Ascending aorta (tissue), 2 donors: ENCODE measurements at regions of chr12 and their contacts with region 1.

Region 1: DNA sequence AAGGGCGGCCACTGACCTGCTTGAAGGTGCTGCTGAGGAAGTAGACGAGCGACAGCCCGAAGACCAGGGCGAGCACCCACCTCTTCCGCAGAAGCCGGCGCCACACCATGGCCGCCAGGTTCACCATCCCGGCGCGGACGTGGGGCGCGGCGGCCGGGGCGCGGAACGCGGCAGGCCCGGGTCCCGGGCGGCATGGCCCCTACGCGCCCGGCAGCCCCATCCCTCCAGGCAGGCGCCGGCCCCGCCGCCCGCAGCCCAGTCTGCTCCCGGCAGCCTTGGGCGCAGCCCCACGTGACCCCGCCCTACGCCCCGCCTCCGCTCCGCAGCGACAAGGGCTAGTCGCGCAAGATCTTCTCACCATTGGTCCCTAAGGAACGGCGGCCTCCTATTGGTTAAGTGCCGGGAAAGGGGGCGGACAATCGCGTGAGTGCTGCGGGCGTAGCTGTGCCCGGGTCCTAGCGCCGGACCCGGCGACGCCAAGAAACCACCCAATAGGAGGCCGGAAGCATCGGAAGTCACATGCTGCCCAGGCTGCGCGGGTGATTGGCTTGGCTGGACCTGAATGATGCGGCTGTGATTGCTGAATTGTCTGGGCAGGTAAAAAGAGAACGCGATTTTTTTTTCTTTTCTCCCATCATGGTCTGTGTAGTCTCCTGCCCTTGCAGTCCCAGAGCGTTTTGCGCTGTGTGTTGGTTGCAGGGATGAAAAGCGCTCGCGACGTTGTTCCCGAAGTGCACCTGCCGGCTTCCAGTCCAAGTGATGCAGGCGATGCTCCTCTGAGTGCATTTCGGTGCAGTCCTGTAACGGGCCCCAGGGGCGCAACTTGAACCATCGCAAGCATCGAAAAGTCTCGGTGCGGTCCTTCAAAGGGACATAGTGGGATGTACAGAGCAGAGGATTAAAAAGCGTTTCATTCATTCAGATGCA is at the starts of genes RNFT2 and SPRING1:
- DNase-seq: peak; percentile 98 to 100
- H3K4me3 ChIP-seq: peak within 1 kb of the TSS; percentile 88 to 91
- H3K27ac ChIP-seq: peak within 1 kb of the TSS in 1 of 2 donors; percentile 68
- H3K4me1 ChIP-seq: peaks cover 0 to 6% of the 10 kb centered on the region in 2 donors
- H3K27me3 ChIP-seq: no peaks in the 10 kb centered on the region
- CTCF ChIP-seq: no peak
- total RNA-seq, gene RNFT2: 0.21 TPM
- total RNA-seq, gene SPRING1: 16.0 TPM

Region 2: DNA sequence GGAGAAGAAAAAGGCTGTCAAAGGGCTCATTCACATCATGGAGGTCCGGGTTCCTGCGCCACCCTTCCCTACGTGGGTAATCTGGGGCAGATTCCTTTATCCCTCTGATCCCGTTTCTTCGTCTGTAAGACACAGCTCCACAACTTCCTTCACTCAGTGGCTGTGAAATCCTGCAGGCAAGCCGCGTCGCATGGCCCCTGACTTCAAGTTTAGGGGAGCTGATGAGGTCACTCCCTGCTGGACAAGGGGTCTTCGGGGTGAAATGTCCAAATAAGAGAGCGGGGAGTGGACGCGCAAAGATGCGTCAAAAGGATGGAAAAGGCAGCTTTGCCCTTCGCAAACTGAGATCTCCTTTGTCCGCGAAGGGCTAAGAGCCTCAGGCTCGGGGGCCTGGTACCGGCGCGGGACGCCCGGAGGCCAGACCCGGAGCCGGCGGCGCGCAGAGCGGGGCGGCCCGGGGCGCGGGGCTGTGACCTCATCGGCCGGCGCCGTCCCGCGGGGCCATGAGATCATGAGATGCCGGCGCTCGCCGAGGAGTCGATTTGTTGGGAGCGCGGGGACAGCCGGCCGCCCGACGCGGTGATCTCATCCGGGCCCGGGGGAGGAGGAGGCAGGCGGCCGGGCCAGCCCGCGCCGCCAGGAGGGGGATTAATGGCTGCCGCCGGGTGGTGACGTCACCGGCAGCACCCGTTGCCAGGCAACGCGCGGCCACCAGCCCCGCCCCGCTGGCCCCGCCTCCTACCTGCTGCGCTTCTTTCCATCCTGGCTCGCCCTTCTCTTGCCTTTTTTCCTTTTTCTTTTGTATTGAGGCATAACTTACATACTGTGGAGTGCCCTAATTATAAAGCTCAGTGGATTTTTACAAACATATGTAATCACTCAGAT is 81.2 kb after region 1 on chr12:
- intact Hi-C with region 1: loop called (anchors 1 kb)
- DNase-seq: peak; percentile 55 to 96
- H3K4me3 ChIP-seq: peak overlapping the region; percentile 75 to 82
- H3K27ac ChIP-seq: peak overlapping the region; percentile 92 to 97
- H3K4me1 ChIP-seq: peaks cover 3 to 9% of the 10 kb centered on the region in 2 donors
- H3K27me3 ChIP-seq: no peaks in the 10 kb centered on the region
- CTCF ChIP-seq: no peak

Region 3: DNA sequence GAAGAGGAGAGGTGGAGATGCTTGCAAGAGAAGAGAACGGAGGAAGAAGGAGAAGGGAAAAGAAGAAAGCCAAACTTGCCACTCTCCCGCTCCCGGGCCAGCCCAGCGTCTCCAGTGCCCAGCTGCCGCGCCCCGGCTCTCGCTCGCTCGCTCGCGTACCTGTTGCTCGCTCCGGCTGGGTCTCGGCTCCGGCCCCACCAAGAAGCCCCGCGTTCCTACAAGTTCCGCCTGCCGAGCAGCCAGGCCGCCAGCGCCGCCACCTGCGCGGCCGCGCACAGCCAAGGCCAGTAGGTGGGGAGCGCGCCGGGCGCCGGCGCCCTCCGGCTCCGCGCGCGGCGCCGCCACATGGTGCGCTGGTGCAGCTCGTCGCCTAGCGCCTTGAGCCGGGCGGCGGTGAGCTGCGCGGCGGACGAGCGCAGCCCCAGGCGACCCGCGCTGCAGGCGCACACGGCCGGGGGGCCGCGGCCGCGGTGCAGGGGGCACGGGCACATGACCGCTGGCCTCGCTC is 142.8 kb after region 1 on chr12:
- intact Hi-C with region 1: loop called (anchors 10 kb)
- DNase-seq: no peak
- H3K4me3 ChIP-seq: peak overlapping the region; percentile 55 to 58
- H3K27ac ChIP-seq: no peak overlapping the region
- H3K4me1 ChIP-seq: peaks cover 10 to 24% of the 10 kb centered on the region in 2 donors
- H3K27me3 ChIP-seq: peaks cover 12% of the 10 kb centered on the region
- CTCF ChIP-seq: no peak

Region 4: DNA sequence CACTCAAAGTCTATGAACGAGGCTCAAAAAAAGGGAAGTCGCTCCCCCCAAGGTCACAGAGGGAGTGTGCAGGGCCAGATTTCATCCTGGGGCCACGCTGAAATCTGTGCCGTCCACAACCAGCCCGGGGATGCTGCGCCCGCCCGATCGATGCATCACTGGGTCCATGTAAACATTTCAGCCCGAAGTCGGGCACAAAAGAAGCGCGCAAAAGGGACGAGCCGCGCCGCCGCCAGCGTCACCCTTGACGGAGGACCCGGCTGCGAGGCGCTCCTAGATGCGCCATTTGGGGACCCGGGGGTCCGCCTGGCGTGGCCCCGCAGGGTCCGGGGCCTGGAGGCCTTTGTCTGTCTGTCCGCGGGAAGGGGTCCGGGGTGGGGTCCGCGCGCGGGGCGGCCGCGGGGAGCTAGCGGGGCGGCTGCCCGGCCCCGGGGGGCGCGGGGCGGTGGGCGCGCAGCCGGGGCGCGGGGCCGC is 451.7 kb after region 1 on chr12:
- intact Hi-C with region 1: loop called (anchors 10 kb)
- DNase-seq: no peak
- H3K4me3 ChIP-seq: peak overlapping the region; percentile 88 to 91
- H3K27ac ChIP-seq: peak overlapping the region; percentile 78 to 81
- H3K4me1 ChIP-seq: no peaks in the 10 kb centered on the region
- H3K27me3 ChIP-seq: no peaks in the 10 kb centered on the region
- CTCF ChIP-seq: no peak